CD4-positive, alpha-beta memory T cell (primary cell): ENCODE measurements at regions of chr19 and their contacts with region 1.

Region 1: GRCh38 chr19:19776041-19777008 is 43.4 kb upstream of the ZNF14 start:
- DNase-seq: peak; percentile 90 to 97 (median 92)
- H3K4me3 ChIP-seq: peak overlapping the region; percentile 100
- H3K4me3 Mint-ChIP-seq: peak overlapping the region; percentile 96 to 100 (median 98)
- H3K27ac ChIP-seq: peak overlapping the region; percentile 70
- H3K27ac Mint-ChIP-seq: peak overlapping the region; percentile 85 to 99 (median 98)
- H3K4me1 ChIP-seq: peaks cover 31% of the 10 kb centered on the region
- H3K4me1 Mint-ChIP-seq: peaks cover 28 to 51% (median 38%) of the 10 kb centered on the region in 4 donors
- H3K27me3 ChIP-seq: no peaks in the 10 kb centered on the region
- H3K27me3 Mint-ChIP-seq: no peaks in the 10 kb centered on the region

Region 2: GRCh38 chr19:19515764-19516519 is 260.4 kb before region 1 on chr19 and contains the start of gene NDUFA13:
- CTCF ChIA-PET with region 1: no interaction called
- POLR2A ChIA-PET with region 1: interaction called, 14 read pairs
- intact Hi-C with region 1: no loop called
- DNase-seq: peak; percentile 91 to 95 (median 92)
- H3K4me3 ChIP-seq: peak within 1 kb of the TSS; percentile 88 to 90
- H3K4me3 Mint-ChIP-seq: peak within 1 kb of the TSS; percentile 93 to 99 (median 97)
- H3K27ac ChIP-seq: peak within 1 kb of the TSS; percentile 92
- H3K27ac Mint-ChIP-seq: peak within 1 kb of the TSS; percentile 94 to 98 (median 97)
- H3K4me1 ChIP-seq: peaks cover 35% of the 10 kb centered on the region
- H3K4me1 Mint-ChIP-seq: peaks cover 16 to 47% (median 29%) of the 10 kb centered on the region in 4 donors
- H3K27me3 ChIP-seq: no peaks in the 10 kb centered on the region
- H3K27me3 Mint-ChIP-seq: no peaks in the 10 kb centered on the region
- total RNA-seq, gene NDUFA13: 191 to 199 TPM

Region 3: DNA sequence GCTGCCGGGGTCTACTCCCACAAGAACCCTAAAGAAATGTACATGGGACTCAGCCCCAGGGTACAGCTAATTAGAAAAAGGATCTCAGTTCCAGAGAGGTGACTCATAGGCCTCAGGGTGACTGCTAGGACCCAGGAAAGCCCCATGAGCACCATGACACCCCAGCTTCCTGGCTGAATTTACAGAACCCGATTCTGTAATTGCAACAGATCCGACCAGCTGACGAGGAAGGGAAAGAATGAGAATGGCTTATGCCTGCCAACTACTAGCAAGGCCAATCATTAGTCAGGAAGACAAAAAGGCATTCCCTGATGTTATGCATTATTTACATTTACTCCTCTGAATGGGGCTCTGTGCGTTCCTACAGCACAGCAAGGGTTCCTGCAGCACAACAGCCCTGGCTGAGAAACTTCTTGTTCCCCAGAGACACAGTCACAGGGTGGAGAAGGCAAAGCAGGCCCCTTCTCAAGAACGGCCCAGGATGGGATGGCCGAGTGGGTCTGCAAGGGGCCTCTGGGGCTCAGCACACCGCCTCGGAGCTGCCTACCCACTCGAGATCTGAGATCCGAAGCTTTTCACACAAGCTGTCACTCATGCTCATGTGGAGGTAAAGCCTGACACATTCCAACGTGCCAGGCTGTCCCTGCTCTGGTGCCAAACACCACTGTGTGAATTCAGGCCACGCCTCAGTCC is 185.0 kb before region 1 on chr19:
- CTCF ChIA-PET with region 1: no interaction called
- POLR2A ChIA-PET with region 1: no interaction called
- intact Hi-C with region 1: no loop called
- DNase-seq: peak; percentile 63 to 96 (median 69)
- H3K4me3 ChIP-seq: no peak overlapping the region
- H3K4me3 Mint-ChIP-seq: peak overlapping the region in 7 of 8 donors; percentile 28 to 88 (median 62)
- H3K27ac ChIP-seq: peak overlapping the region; percentile 90
- H3K27ac Mint-ChIP-seq: peak overlapping the region; percentile 92 to 98 (median 96)
- H3K4me1 ChIP-seq: peaks cover 71% of the 10 kb centered on the region
- H3K4me1 Mint-ChIP-seq: peaks cover 30 to 74% (median 52%) of the 10 kb centered on the region in 4 donors
- H3K27me3 ChIP-seq: no peaks in the 10 kb centered on the region
- H3K27me3 Mint-ChIP-seq: no peaks in the 10 kb centered on the region

Region 4: GRCh38 chr19:19788015-19788414 is 11.7 kb after region 1 on chr19:
- CTCF ChIA-PET with region 1: no interaction called
- POLR2A ChIA-PET with region 1: interaction called, 15 read pairs
- intact Hi-C with region 1: no loop called
- DNase-seq: no peak
- H3K4me3 ChIP-seq: no peak overlapping the region
- H3K4me3 Mint-ChIP-seq: no peak overlapping the region
- H3K27ac ChIP-seq: no peak overlapping the region
- H3K27ac Mint-ChIP-seq: peak overlapping the region in 1 of 7 donors; percentile 48
- H3K4me1 ChIP-seq: no peaks in the 10 kb centered on the region
- H3K4me1 Mint-ChIP-seq: peaks cover 12 to 20% (median 13%) of the 10 kb centered on the region in 4 donors
- H3K27me3 ChIP-seq: no peaks in the 10 kb centered on the region
- H3K27me3 Mint-ChIP-seq: no peaks in the 10 kb centered on the region

Region 5: GRCh38 chr19:19865739-19866481 is 89.6 kb after region 1 on chr19 and contains the start of gene ZNF253:
- CTCF ChIA-PET with region 1: interaction called, 3 read pairs
- POLR2A ChIA-PET with region 1: interaction called, 30 read pairs
- intact Hi-C with region 1: loop called (anchors 1 kb)
- DNase-seq: peak; percentile 91 to 97 (median 91)
- H3K4me3 ChIP-seq: peak within 1 kb of the TSS; percentile 92
- H3K4me3 Mint-ChIP-seq: peak within 1 kb of the TSS; percentile 99 to 100 (median 100)
- H3K27ac ChIP-seq: peak within 1 kb of the TSS; percentile 75
- H3K27ac Mint-ChIP-seq: peak within 1 kb of the TSS; percentile 98 to 99 (median 98)
- H3K4me1 ChIP-seq: peaks cover 30% of the 10 kb centered on the region
- H3K4me1 Mint-ChIP-seq: peaks cover 18 to 50% (median 29%) of the 10 kb centered on the region in 4 donors
- H3K27me3 ChIP-seq: no peaks in the 10 kb centered on the region
- H3K27me3 Mint-ChIP-seq: no peaks in the 10 kb centered on the region
- total RNA-seq, gene ZNF253: 23.8 to 25.8 TPM

Region 6: GRCh38 chr19:19900729-19901444 is 124.6 kb after region 1 on chr19 and contains the start of gene ZNF93:
- CTCF ChIA-PET with region 1: no interaction called
- POLR2A ChIA-PET with region 1: interaction called, 19 read pairs
- intact Hi-C with region 1: loop called (anchors 1 kb)
- DNase-seq: peak; percentile 90 to 96 (median 92)
- H3K4me3 ChIP-seq: peak within 1 kb of the TSS; percentile 79 to 82
- H3K4me3 Mint-ChIP-seq: peak within 1 kb of the TSS; percentile 96 to 99 (median 98)
- H3K27ac ChIP-seq: peak within 1 kb of the TSS; percentile 66
- H3K27ac Mint-ChIP-seq: peak within 1 kb of the TSS; percentile 80 to 97 (median 93)
- H3K4me1 ChIP-seq: peaks cover 15% of the 10 kb centered on the region
- H3K4me1 Mint-ChIP-seq: peaks cover 12 to 34% (median 24%) of the 10 kb centered on the region in 4 donors
- H3K27me3 ChIP-seq: no peaks in the 10 kb centered on the region
- H3K27me3 Mint-ChIP-seq: no peaks in the 10 kb centered on the region
- total RNA-seq, gene ZNF93: 8.8 to 9.2 TPM